ENCODE measurements at regions of chr3 and their contacts with region 1.

Region 1: GRCh38 chr3:132669256-132669777 is 9.2 kb downstream of the UBA5 start:
- DNase-seq: no peak
- ATAC-seq: no peak
- H3K4me3 ChIP-seq: no peak overlapping the region
- H3K27ac ChIP-seq: no peak overlapping the region
- H3K4me1 ChIP-seq: no peaks in the 10 kb centered on the region
- H3K27me3 ChIP-seq: no peaks in the 10 kb centered on the region
- CTCF ChIP-seq: no peak

Region 2: GRCh38 chr3:132703733-132704132 is 34.4 kb after region 1 on chr3:
- intact Hi-C with region 1: loop called in 1 of 2 experiments (anchors 5 kb)
- DNase-seq: no peak
- ATAC-seq: no peak
- H3K4me3 ChIP-seq: no peak overlapping the region
- H3K27ac ChIP-seq: no peak overlapping the region
- H3K4me1 ChIP-seq: no peaks in the 10 kb centered on the region
- H3K27me3 ChIP-seq: no peaks in the 10 kb centered on the region
- CTCF ChIP-seq: no peak

Region 3: GRCh38 chr3:132716372-132716771 is 47.1 kb after region 1 on chr3:
- intact Hi-C with region 1: loop called (anchors 5 to 10 kb)
- DNase-seq: no peak
- ATAC-seq: no peak
- H3K4me3 ChIP-seq: no peak overlapping the region
- H3K27ac ChIP-seq: no peak overlapping the region
- H3K4me1 ChIP-seq: peaks cover 22% of the 10 kb centered on the region
- H3K27me3 ChIP-seq: no peaks in the 10 kb centered on the region
- CTCF ChIP-seq: no peak

Measured in psoas muscle (tissue), 8 donors.